Caco-2 (cell line): ENCODE measurements at regions of chr16 and their contacts with region 1.

Region 1: DNA sequence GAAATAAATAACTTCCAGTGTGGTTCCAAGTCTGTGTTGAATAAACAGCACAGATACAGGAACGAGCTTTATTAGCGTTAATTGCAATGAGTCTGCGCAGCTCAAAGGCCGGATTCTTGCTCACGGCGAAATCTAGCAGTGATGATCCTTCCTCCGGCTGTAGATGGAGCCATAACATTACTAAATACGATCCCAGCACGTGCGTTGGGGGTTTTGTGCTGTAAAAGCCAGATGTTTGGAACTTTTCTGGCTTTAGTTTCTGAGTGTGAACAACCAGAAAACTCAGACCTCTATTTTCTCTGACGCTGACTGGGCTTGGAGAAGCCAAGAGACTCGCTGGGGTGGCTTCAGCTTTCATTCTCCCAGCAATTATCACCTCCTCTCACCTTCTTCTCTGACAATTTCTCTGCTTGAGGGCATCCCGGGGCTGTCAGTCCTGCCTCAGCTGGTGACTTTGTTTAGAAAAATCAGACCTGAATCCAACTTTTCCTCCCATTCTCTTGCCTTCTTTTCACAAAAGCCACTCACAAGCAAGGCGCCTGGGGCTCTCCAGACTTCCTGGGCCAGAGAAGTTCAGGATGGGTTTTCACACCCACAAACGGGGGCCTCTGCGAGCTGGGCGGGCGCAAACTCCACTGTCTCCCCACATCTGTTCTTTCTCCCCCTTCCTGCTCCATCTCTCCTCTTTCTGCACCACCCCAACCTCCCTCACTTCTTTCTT is 47.1 kb upstream of the AKTIP start:
- DNase-seq: peak; percentile 75 to 82
- H3K4me3 ChIP-seq: no peak overlapping the region
- H3K4me3 Mint-ChIP-seq: no peak overlapping the region
- H3K27ac Mint-ChIP-seq: peak overlapping the region; percentile 73
- H3K4me1 ChIP-seq: peaks cover 13% of the 10 kb centered on the region
- H3K4me1 Mint-ChIP-seq: peaks cover 12% of the 10 kb centered on the region
- H3K27me3 ChIP-seq: no peaks in the 10 kb centered on the region
- H3K27me3 Mint-ChIP-seq: no peaks in the 10 kb centered on the region
- CTCF ChIP-seq: peak; percentile 76

Region 2: GRCh38 chr16:53503270-53503923 is 46.7 kb before region 1 on chr16:
- CTCF ChIA-PET with region 1: interaction called, 10 read pairs
- POLR2A ChIA-PET with region 1: no interaction called
- intact Hi-C with region 1: no loop called
- DNase-seq: peak; percentile 100
- H3K4me3 ChIP-seq: peak overlapping the region; percentile 89
- H3K4me3 Mint-ChIP-seq: peak overlapping the region; percentile 93
- H3K27ac Mint-ChIP-seq: peak overlapping the region; percentile 93
- H3K4me1 ChIP-seq: peaks cover 24% of the 10 kb centered on the region
- H3K4me1 Mint-ChIP-seq: peaks cover 27% of the 10 kb centered on the region
- H3K27me3 ChIP-seq: no peaks in the 10 kb centered on the region
- H3K27me3 Mint-ChIP-seq: no peaks in the 10 kb centered on the region
- CTCF ChIP-seq: no peak

Region 3: GRCh38 chr16:53642094-53642493 is 92.0 kb after region 1 on chr16:
- CTCF ChIA-PET with region 1: no interaction called
- POLR2A ChIA-PET with region 1: no interaction called
- intact Hi-C with region 1: no loop called
- DNase-seq: no peak
- H3K4me3 ChIP-seq: no peak overlapping the region
- H3K4me3 Mint-ChIP-seq: no peak overlapping the region
- H3K27ac Mint-ChIP-seq: no peak overlapping the region
- H3K4me1 ChIP-seq: 0 out of 2 replicates have a peak, but pooled peaks cover 3% of the 10 kb centered on the region
- H3K4me1 Mint-ChIP-seq: peaks cover 11% of the 10 kb centered on the region
- H3K27me3 ChIP-seq: no peaks in the 10 kb centered on the region
- H3K27me3 Mint-ChIP-seq: no peaks in the 10 kb centered on the region
- CTCF ChIP-seq: no peak

Region 4: DNA sequence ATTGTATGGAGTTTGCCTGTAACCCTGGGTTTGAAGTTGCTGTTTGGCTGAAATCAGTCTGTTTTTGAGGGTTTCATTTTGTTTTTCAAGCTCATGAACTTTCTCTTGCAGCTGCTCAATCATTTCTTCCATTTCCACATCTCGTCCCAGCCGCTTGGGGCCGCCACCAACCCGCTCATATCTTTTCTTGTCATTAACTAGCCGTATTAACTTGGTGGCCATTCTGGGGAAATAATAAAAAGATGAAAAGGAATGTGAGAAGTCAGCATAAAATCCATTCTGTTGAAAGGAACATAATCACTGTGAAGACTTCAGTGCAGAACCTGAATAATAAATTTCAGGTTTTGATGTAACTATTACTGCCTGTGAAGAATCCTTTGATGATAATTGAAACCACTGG is 142.0 kb after region 1 on chr16:
- CTCF ChIA-PET with region 1: interaction called, 14 read pairs
- POLR2A ChIA-PET with region 1: no interaction called
- intact Hi-C with region 1: loop called (anchors 1 kb)
- DNase-seq: peak; percentile 58 to 73
- H3K4me3 ChIP-seq: no peak overlapping the region
- H3K4me3 Mint-ChIP-seq: no peak overlapping the region
- H3K27ac Mint-ChIP-seq: no peak overlapping the region
- H3K4me1 ChIP-seq: peaks cover 3% of the 10 kb centered on the region; the same call in 1 of the 2 replicates
- H3K4me1 Mint-ChIP-seq: no peaks in the 10 kb centered on the region
- H3K27me3 ChIP-seq: no peaks in the 10 kb centered on the region
- H3K27me3 Mint-ChIP-seq: no peaks in the 10 kb centered on the region
- CTCF ChIP-seq: peak; percentile 74 to 75

Region 5: GRCh38 chr16:53755536-53755910 is 205.4 kb after region 1 on chr16:
- CTCF ChIA-PET with region 1: interaction called, 17 read pairs
- POLR2A ChIA-PET with region 1: no interaction called
- intact Hi-C with region 1: no loop called
- DNase-seq: peak; percentile 64 to 85
- H3K4me3 ChIP-seq: no peak overlapping the region
- H3K4me3 Mint-ChIP-seq: peak overlapping the region; percentile 17
- H3K27ac Mint-ChIP-seq: peak overlapping the region; percentile 82
- H3K4me1 ChIP-seq: peaks cover 42% of the 10 kb centered on the region
- H3K4me1 Mint-ChIP-seq: peaks cover 50% of the 10 kb centered on the region
- H3K27me3 ChIP-seq: no peaks in the 10 kb centered on the region
- H3K27me3 Mint-ChIP-seq: no peaks in the 10 kb centered on the region
- CTCF ChIP-seq: no peak

Region 6: DNA sequence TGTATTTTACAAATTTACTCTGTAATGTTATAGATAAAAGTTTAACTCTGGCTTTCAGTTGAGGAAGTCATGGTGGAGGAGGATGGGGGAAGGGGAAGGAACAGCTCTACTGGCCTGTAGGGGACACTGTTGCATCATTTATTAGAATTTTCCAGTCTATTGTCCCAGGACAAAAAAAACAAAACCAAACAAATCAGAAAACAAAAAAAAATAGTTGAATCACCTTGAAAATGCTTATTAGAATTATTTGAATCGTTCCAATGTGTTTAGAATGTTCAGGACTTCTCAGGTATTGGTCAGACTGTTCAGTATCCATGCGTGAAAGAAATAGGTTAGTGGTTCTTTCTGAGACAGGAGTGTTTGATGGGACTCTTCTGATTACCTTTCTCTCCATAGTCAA is 395.9 kb after region 1 on chr16:
- CTCF ChIA-PET with region 1: interaction called, 3 read pairs
- POLR2A ChIA-PET with region 1: no interaction called
- intact Hi-C with region 1: loop called (anchors 5 kb)
- DNase-seq: peak in 1 of 2 experiments; percentile 65
- H3K4me3 ChIP-seq: no peak overlapping the region
- H3K4me3 Mint-ChIP-seq: no peak overlapping the region
- H3K27ac Mint-ChIP-seq: no peak overlapping the region
- H3K4me1 ChIP-seq: peaks cover 14% of the 10 kb centered on the region
- H3K4me1 Mint-ChIP-seq: peaks cover 7% of the 10 kb centered on the region
- H3K27me3 ChIP-seq: no peaks in the 10 kb centered on the region
- H3K27me3 Mint-ChIP-seq: no peaks in the 10 kb centered on the region
- CTCF ChIP-seq: peak; percentile 69 to 87

Region 7: DNA sequence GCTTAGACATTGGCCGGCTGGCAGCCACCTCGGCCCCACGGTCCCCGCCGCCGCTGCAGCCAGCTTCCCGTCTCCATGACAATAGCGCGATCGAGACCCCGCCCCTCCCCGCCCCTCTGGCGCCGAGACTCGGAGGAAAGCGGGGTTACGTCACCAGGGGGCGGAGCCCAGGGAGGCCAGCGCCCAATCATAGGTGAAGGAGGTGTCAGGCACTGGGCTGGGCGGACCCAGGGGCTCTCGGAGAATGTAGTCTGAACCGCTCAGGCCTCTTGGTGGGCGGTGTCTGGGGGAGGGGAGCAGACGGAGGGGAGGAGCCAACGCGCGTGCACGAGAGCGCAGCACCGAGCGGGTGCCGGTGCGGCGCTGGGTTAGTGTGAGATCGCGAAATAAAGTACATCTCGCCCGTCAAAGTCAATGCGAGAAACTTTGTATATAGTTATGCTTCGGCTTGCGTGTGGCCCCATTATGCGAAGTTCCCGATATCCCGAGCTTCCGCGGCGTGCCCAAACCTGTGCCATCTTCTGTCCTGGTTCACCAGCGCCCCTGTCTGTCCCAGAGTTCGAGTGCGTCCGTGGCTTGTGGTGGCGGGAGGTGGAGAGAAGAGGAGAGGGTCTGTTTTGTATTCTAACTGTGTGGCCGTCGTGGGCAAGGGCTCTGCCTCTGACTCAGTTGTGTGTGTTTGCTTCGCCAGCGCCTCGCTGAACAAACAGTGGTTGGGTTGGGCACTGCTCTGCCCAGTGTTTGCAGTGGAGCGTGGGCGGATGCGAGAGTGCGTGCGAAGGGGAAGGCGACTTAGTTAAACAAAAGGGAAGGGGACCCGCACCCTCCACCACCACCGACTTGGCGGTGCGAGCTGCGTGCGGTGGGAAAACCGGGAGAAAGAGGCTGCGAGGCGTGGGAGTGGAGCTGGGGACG is 1379.2 kb after region 1 on chr16:
- CTCF ChIA-PET with region 1: no interaction called
- POLR2A ChIA-PET with region 1: no interaction called
- intact Hi-C with region 1: loop called (anchors 1 kb)
- DNase-seq: peak; percentile 100
- H3K4me3 ChIP-seq: peak overlapping the region; percentile 76
- H3K4me3 Mint-ChIP-seq: peak overlapping the region; percentile 96
- H3K27ac Mint-ChIP-seq: peak overlapping the region; percentile 89
- H3K4me1 ChIP-seq: peaks cover 24% of the 10 kb centered on the region
- H3K4me1 Mint-ChIP-seq: peaks cover 27% of the 10 kb centered on the region
- H3K27me3 ChIP-seq: no peaks in the 10 kb centered on the region
- H3K27me3 Mint-ChIP-seq: no peaks in the 10 kb centered on the region
- CTCF ChIP-seq: peak in 1 of 2 experiments; percentile 23